Spleen (tissue), 13 donors: ENCODE measurements at regions of chr15 and their contacts with region 1.

Region 1: GRCh38 chr15:89177633-89178306 is 43.6 kb downstream of the RLBP1 start:
- DNase-seq: no peak
- H3K4me3 ChIP-seq: no peak overlapping the region
- H3K27ac ChIP-seq: peak overlapping the region in 3 of 8 donors; percentile 3 to 32 (median 14)
- H3K4me1 ChIP-seq: peaks cover 0 to 16% (median 6%) of the 10 kb centered on the region in 6 donors
- H3K27me3 ChIP-seq: no peaks in the 10 kb centered on the region
- CTCF ChIP-seq: peak; percentile 69 to 88 (median 78)
- POLR2A ChIP-seq: no peak

Region 2: DNA sequence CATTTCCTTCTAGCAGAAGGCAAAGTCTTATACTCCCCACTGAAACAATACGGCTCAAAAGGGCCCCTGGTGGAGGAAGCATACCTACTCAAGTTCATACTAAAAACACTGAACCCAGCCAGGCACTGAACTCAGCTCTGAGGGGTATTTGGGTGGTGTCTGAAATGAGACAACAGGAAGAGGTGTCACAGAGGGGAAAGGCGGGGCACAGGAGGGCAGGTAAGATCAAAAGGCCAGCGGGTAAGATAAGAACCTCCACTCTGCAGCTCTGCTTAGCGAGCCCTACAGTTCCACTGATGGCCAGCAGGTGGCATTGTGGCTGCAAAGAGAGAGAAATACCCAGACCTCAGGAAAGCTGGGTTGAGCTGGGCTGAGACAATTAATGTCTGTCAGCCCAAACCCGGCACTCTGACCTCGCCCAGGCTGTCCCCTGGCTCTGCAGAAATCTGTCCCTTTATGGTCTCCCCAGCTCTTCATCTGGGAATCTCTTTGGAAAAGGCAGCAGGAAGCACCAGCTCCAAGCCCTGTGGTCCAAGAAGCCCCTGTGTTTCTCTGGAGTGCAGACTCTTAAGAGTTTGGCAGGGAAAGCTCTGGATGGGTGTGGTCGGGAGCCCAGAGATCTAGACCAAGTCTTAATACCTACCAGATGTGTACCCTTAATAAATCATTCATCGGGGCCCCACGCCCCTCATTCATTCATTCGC is 273.0 kb before region 1 on chr15:
- intact Hi-C with region 1: loop called (anchors 10 kb)
- DNase-seq: peak; percentile 93
- H3K4me3 ChIP-seq: no peak overlapping the region
- H3K27ac ChIP-seq: peak overlapping the region in 4 of 8 donors; percentile 43 to 72 (median 56)
- H3K4me1 ChIP-seq: peaks cover 0 to 15% (median 9%) of the 10 kb centered on the region in 6 donors
- H3K27me3 ChIP-seq: no peaks in the 10 kb centered on the region
- CTCF ChIP-seq: peak; percentile 94 to 98 (median 98)
- POLR2A ChIP-seq: no peak

Region 3: GRCh38 chr15:89057504-89058133 is 120.2 kb before region 1 on chr15:
- intact Hi-C with region 1: loop called (anchors 5 kb)
- DNase-seq: peak; percentile 94
- H3K4me3 ChIP-seq: no peak overlapping the region
- H3K27ac ChIP-seq: no peak overlapping the region
- H3K4me1 ChIP-seq: peaks cover 0 to 14% (median 9%) of the 10 kb centered on the region in 6 donors
- H3K27me3 ChIP-seq: no peaks in the 10 kb centered on the region
- CTCF ChIP-seq: peak; percentile 98 to 99 (median 99)
- POLR2A ChIP-seq: no peak